Ascending aorta (tissue), 2 donors: ENCODE measurements at regions of chr6 and their contacts with region 1.

Region 1: GRCh38 chr6:26568601-26569432 is 27.9 kb upstream of the ABT1 start:
- DNase-seq: peak; percentile 80 to 97
- H3K4me3 ChIP-seq: peak overlapping the region; percentile 61 to 73
- H3K27ac ChIP-seq: peak overlapping the region; percentile 62 to 71
- H3K4me1 ChIP-seq: peaks cover 0 to 4% of the 10 kb centered on the region in 2 donors
- H3K27me3 ChIP-seq: no peaks in the 10 kb centered on the region
- CTCF ChIP-seq: peak in 1 of 3 experiments; percentile 33

Region 2: DNA sequence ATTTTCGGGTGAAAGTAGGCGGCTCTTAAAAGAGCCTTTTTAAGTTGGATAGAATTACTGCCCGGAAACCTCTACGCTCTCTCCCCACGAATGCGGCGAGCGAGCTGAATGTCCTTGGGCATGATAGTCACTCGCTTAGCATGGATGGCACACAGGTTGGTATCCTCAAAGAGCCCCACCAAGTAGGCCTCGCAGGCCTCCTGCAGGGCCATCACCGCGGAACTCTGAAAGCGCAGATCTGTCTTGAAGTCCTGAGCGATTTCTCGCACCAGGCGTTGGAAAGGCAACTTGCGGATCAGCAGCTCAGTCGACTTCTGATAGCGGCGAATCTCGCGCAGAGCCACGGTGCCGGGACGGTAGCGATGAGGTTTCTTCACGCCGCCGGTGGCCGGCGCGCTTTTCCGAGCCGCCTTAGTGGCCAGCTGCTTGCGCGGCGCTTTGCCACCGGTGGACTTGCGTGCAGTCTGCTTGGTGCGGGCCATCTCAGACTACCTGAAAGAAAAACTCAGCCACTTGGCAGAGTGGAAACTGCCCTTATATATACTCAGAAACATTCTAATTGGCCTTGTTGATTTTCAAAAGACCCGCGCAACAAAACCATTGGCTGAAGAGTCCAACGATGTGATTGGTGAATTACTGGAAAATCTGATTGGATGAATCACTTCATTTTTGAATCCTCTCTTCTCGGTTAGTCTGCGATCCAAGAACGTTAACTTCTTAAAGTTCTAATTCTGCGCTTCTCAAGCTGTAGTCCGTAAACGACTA is 297.7 kb before region 1 on chr6:
- intact Hi-C with region 1: no loop called
- DNase-seq: peak in 1 of 2 donors; percentile 87
- H3K4me3 ChIP-seq: peak overlapping the region; percentile 54 to 72
- H3K27ac ChIP-seq: peak overlapping the region; percentile 93 to 95
- H3K4me1 ChIP-seq: peaks cover 0 to 10% of the 10 kb centered on the region in 2 donors
- H3K27me3 ChIP-seq: no peaks in the 10 kb centered on the region
- CTCF ChIP-seq: no peak

Region 3: GRCh38 chr6:26342106-26343004 is 226.5 kb before region 1 on chr6:
- intact Hi-C with region 1: loop called (anchors 5 kb)
- DNase-seq: no peak
- H3K4me3 ChIP-seq: peak overlapping the region in 1 of 2 donors; percentile 25
- H3K27ac ChIP-seq: no peak overlapping the region
- H3K4me1 ChIP-seq: peaks cover 0 to 3% of the 10 kb centered on the region in 2 donors
- H3K27me3 ChIP-seq: no peaks in the 10 kb centered on the region
- CTCF ChIP-seq: no peak

Region 4: DNA sequence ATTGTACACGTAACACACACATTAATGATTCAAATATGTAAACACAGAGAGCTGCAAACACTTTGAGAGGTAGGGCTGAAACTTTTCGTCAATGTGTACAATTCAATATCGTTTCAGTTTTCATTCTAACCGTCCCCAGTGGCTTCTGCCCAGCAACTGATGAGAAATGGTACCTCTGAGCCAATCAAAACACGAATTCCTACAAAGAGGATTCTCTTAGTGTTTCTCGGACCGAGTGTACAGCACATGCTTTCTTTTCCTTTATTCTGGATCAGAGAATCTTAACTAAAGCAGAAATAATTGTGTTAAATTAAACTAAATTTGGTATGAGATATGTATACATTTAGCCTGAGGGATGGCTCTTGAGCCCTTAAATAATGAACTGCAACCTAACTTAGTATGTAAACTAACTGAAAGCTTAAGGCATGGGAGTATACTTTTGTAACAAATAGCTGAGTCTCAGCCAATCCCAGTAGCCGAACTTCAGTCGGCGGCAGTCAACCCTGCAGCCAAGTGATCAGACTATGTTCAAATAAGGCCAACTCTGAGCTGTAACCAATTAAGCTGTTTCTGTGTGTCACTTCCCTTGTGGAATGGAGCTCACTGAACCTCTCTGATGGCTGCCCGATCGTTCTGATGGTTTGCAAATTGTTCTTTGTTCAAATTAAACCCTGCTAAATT is 94.9 kb before region 1 on chr6:
- intact Hi-C with region 1: loop called (anchors 5 kb)
- DNase-seq: peak; percentile 68 to 92
- H3K4me3 ChIP-seq: peak overlapping the region; percentile 57 to 64
- H3K27ac ChIP-seq: peak overlapping the region; percentile 91
- H3K4me1 ChIP-seq: peaks cover 6 to 9% of the 10 kb centered on the region in 2 donors
- H3K27me3 ChIP-seq: no peaks in the 10 kb centered on the region
- CTCF ChIP-seq: no peak

Region 5: DNA sequence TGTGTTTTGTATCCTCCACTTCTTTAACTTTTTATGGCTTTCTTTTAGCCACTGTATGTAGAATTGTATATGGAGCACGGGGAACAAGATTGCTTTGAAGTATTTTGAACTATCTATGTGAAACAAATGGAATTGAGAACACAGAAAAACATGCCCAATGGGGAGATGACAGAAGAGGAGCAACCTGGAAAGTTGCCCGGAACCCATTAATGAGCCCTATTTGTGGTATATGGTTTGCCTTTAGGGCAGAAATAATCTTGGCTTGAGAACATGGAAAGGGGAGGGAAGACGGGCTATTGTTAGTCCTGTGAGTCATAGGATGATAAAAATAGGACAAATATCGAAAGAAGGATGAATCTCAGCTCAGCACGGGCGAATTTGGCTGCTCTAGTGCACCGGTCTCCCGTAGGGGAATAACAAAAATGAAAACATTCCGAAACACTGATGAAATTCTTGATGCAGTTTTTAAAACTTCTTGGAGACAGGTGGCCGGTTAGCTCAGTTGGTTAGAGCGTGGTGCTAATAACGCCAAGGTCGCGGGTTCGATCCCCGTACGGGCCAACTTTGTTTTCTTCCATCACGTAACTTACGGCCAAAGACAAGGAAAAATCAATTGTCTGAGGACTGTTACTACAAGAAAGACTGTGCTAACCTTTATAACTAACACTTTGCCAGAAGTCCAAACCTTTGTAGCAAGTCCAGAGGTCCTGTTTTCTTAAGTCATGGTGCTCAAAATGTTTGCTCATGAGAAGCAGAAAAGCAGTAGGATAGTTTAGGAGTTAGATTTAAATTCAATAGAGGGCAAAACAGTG is 15.0 kb before region 1 on chr6:
- intact Hi-C with region 1: loop called (anchors 1 kb)
- DNase-seq: peak; percentile 57 to 93
- H3K4me3 ChIP-seq: peak overlapping the region; percentile 31 to 59
- H3K27ac ChIP-seq: peak overlapping the region; percentile 70 to 75
- H3K4me1 ChIP-seq: peaks cover 0 to 4% of the 10 kb centered on the region in 2 donors
- H3K27me3 ChIP-seq: no peaks in the 10 kb centered on the region
- CTCF ChIP-seq: no peak